A673 (cell line): ENCODE measurements at regions of chr7 and their contacts with region 1.

Region 1: GRCh38 chr7:101542527-101543241 is 86.4 kb downstream of the MYL10 start:
- DNase-seq: peak; percentile 62
- H3K4me3 ChIP-seq: no peak overlapping the region
- H3K27ac ChIP-seq: no peak overlapping the region
- H3K4me1 ChIP-seq: no peaks in the 10 kb centered on the region
- H3K27me3 ChIP-seq: no peaks in the 10 kb centered on the region
- CTCF ChIP-seq: peak; percentile 91

Region 2: DNA sequence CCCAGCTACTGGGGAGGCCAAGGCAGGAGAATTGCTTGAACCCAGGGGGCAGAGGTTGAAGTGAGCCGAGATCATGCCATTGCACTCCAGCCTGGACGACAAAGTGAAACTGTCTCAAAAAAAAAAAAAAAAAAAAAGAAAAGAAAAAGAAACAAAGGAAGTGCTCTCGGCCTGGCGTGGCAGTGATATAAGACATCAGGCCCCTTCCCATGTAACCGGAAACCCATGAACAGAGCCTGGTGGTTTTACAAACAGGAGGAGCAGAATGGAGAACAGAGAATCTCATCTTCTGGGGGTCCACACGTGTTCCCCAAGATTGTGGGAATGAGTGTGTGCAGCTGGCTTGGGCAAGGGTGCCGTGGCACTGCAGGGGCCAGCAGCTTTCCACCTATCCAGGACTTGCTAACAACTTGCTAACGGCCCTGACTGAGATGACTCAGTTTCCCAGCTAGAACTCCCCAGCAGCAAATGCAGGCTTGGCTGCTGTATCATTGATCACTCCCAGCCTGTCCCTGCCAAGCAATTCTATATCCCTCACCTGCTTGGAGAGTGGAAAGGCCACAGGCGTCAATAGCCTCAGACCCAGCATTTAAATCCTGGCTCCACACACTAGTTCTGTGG is 77.0 kb before region 1 on chr7:
- CTCF ChIA-PET with region 1: no interaction called
- POLR2A ChIA-PET with region 1: no interaction called
- intact Hi-C with region 1: no loop called
- DNase-seq: no peak
- H3K4me3 ChIP-seq: no peak overlapping the region
- H3K27ac ChIP-seq: no peak overlapping the region
- H3K4me1 ChIP-seq: no peaks in the 10 kb centered on the region
- H3K27me3 ChIP-seq: no peaks in the 10 kb centered on the region
- CTCF ChIP-seq: no peak

Region 3: GRCh38 chr7:101517304-101517703 is 25.4 kb before region 1 on chr7:
- CTCF ChIA-PET with region 1: interaction called, 10 read pairs
- POLR2A ChIA-PET with region 1: no interaction called
- intact Hi-C with region 1: no loop called
- DNase-seq: no peak
- H3K4me3 ChIP-seq: no peak overlapping the region
- H3K27ac ChIP-seq: no peak overlapping the region
- H3K4me1 ChIP-seq: no peaks in the 10 kb centered on the region
- H3K27me3 ChIP-seq: peaks cover 3% of the 10 kb centered on the region
- CTCF ChIP-seq: no peak

Region 4: GRCh38 chr7:102272075-102272917 is 729.6 kb after region 1 on chr7:
- CTCF ChIA-PET with region 1: interaction called, 4 read pairs
- POLR2A ChIA-PET with region 1: no interaction called
- intact Hi-C with region 1: loop called (anchors 1 kb)
- DNase-seq: peak; percentile 73
- H3K4me3 ChIP-seq: no peak overlapping the region
- H3K27ac ChIP-seq: no peak overlapping the region
- H3K4me1 ChIP-seq: no peaks in the 10 kb centered on the region
- H3K27me3 ChIP-seq: no peaks in the 10 kb centered on the region
- CTCF ChIP-seq: peak; percentile 96